Common myeloid progenitor, CD34-positive (primary cell): ENCODE measurements at regions of chr11 and their contacts with region 1.

Region 1: DNA sequence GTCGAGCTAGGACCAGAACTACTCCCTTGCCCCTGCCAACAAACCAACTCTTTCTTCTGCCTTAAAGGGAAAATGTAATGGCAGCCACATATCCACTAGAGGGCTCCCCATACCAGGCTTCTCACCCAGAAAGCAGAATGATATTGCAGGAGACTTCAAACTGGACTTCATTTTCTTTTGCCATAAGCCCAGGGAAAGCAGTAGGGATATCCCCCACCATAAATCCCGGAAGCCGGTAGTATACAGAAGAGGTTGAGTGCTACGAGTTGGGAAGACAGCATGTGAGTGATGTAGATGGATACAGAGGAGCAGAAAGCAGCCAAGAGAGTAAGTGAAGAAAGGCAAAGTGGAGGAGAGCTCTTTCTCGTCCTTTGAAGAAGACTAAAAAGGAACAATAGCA is 12.1 kb downstream of the PLAAT5 start:
- DNase-seq: peak; percentile 51 to 78 (median 73)
- H3K4me3 ChIP-seq: no peak overlapping the region
- H3K27ac ChIP-seq: no peak overlapping the region
- H3K4me1 ChIP-seq: peaks cover 0 to 1% (median 0%) of the 10 kb centered on the region in 4 experiments
- H3K27me3 ChIP-seq: peaks cover 0 to 7% (median 0%) of the 10 kb centered on the region in 5 experiments

Region 2: GRCh38 chr11:63508009-63508408 is 29.1 kb after region 1 on chr11:
- CTCF ChIA-PET with region 1: interaction called, 140 read pairs
- POLR2A ChIA-PET with region 1: interaction called, 5 read pairs
- DNase-seq: peak; percentile 60 to 64 (median 63)
- H3K4me3 ChIP-seq: no peak overlapping the region
- H3K27ac ChIP-seq: no peak overlapping the region
- H3K4me1 ChIP-seq: peaks cover 15 to 64% (median 56%) of the 10 kb centered on the region in 4 experiments
- H3K27me3 ChIP-seq: peaks cover 0 to 3% (median 0%) of the 10 kb centered on the region in 5 experiments

Region 3: GRCh38 chr11:63621931-63622782 is 143.3 kb after region 1 on chr11:
- CTCF ChIA-PET with region 1: interaction called, 16 read pairs
- POLR2A ChIA-PET with region 1: no interaction called
- DNase-seq: no peak
- H3K4me3 ChIP-seq: no peak overlapping the region
- H3K27ac ChIP-seq: no peak overlapping the region
- H3K4me1 ChIP-seq: peaks cover 0 to 9% (median 0%) of the 10 kb centered on the region in 4 experiments
- H3K27me3 ChIP-seq: peaks cover 0 to 10% (median 5%) of the 10 kb centered on the region in 5 experiments

Region 4: DNA sequence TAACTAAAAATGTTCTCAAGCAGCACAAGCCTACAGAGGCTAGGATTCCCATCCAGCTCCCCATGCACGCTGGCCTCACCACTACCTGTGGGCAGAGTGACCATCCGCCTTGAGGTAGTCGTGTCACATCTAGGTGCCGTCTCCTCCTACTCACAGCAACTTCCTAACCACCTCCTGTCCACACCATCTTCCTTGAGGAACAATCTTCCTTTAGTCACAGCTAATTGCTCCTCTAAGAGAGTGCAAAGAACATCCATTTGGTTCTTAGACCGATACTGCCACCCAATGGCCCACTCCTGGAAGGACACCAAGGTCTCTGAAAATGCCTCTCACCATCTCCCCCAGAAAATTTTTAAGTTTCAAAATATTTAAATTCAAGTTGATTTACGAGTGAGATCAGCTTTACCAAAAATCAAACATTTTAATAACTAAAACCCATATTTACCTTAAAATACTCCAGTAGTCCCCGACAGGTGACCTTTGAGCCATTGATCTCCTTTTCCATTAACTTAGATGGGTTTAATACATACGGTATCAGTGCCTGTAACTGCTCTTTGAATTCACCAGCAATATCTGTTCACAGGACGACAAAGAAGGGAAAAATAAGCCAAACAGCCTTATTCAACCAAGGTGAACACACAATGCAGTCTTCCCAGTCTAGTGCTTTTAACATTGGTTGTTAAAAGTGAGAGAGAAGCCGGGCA is 157.0 kb after region 1 on chr11:
- CTCF ChIA-PET with region 1: interaction called, 88 read pairs
- POLR2A ChIA-PET with region 1: interaction called, 3 read pairs
- DNase-seq: peak; percentile 58 to 81 (median 75)
- H3K4me3 ChIP-seq: no peak overlapping the region
- H3K27ac ChIP-seq: no peak overlapping the region
- H3K4me1 ChIP-seq: no peaks in the 10 kb centered on the region
- H3K27me3 ChIP-seq: no peaks in the 10 kb centered on the region

Region 5: GRCh38 chr11:63729326-63729725 is 250.4 kb after region 1 on chr11:
- CTCF ChIA-PET with region 1: no interaction called
- POLR2A ChIA-PET with region 1: no interaction called
- DNase-seq: no peak
- H3K4me3 ChIP-seq: no peak overlapping the region
- H3K27ac ChIP-seq: no peak overlapping the region
- H3K4me1 ChIP-seq: peaks cover 0 to 6% (median 0%) of the 10 kb centered on the region in 4 experiments
- H3K27me3 ChIP-seq: no peaks in the 10 kb centered on the region